SK-N-SH (cell line): ENCODE measurements at regions of chr7 and their contacts with region 1.

Region 1: DNA sequence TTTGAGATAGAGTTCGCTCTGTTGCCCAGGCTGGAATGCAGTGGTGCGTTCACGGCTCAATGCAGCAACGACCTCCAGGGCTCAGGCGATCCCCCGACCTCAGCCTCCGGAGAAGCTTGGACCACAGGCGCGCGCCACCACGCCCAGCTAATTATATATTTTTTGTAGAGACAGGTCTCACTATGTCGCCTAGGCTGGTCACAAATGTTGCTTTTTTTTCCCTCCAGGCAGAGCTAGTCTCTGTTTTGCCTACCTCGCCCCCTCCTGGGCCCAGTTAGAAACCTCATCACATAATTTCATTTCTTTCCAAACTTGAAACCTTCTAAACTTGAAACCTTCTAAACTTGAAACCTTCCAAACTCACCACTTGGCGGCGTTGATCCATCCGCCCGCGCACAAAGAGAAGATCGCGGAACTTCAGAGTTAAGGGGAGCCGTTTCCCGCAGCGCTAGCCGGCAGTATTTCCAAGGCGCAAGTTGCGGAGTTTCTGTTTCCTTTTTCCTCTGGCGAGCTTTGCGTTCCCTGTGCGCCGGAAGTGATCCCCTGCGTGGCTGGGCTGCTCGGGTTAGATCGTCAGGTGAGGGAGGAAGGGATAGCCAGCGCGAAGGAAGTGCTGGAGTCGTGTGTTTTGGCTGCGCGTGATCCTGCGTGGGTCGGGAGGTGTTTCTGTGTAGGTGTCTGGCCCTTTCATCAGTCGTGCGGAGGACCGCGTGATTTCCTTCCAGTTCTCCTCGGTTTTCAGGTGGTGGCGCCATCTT is at the start of gene SSBP1:
- DNase-seq: peak; percentile 88
- H3K4me3 ChIP-seq: peak within 1 kb of the TSS; percentile 94 to 95
- H3K27ac ChIP-seq: peak within 1 kb of the TSS; percentile 69 to 93
- H3K4me1 ChIP-seq: peaks cover 6 to 26% of the 10 kb centered on the region in 2 experiments; a peak in 2 of 4 replicates
- H3K27me3 ChIP-seq: no peaks in the 10 kb centered on the region
- CTCF ChIP-seq: peak; percentile 99
- EP300 ChIP-seq: peak in 1 of 2 experiments; percentile 59; a peak in 2 of 4 replicates
- RAD21 ChIP-seq: peak; percentile 61
- polyA plus RNA-seq, gene SSBP1: 191 and 212 TPM in 2 replicates

Region 2: DNA sequence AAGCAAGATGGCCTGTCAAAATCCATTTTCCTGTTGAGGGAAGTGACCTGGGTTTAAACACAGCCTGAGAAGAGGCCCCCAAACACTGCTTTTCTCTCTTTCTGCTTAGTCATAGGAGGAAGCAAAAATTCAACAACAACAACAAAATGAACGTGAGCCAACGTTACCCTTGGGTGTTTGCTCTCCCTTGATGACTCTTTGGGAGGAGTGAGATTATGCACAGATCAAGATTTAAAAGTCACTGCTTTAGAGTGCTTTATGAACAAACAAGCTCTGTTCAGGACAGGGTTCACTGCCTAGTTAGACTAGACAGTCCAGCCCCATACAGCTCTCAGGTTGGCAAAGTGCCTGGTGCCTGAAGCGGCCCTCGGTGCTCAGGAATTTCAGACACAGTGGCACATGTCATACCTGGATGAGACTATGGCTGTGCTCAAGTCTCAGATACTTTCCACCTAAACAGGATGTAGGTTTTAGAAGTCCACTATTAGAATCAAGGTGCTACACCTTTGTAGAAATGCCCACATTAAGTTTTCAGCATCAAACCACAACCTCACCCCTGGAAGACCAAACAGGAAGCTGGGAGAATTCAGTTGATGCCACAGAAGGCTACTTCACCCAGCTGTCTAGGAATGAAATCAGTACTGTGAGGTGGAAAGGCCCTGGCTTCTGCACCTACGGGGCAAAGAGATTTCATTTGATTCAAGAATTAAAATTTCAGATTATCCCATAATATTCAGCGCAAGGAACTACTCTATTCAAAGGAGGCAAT is 74.7 kb before region 1 on chr7:
- CTCF ChIA-PET with region 1: interaction called, 17 read pairs
- POLR2A ChIA-PET with region 1: interaction called, 4 read pairs
- DNase-seq: no peak
- H3K4me3 ChIP-seq: no peak overlapping the region
- H3K27ac ChIP-seq: peak overlapping the region in 1 of 2 experiments; percentile 18; a peak in 1 of 4 replicates
- H3K4me1 ChIP-seq: no peaks in the 10 kb centered on the region
- H3K27me3 ChIP-seq: no peaks in the 10 kb centered on the region
- CTCF ChIP-seq: no peak
- EP300 ChIP-seq: no peak
- RAD21 ChIP-seq: no peak

Region 3: DNA sequence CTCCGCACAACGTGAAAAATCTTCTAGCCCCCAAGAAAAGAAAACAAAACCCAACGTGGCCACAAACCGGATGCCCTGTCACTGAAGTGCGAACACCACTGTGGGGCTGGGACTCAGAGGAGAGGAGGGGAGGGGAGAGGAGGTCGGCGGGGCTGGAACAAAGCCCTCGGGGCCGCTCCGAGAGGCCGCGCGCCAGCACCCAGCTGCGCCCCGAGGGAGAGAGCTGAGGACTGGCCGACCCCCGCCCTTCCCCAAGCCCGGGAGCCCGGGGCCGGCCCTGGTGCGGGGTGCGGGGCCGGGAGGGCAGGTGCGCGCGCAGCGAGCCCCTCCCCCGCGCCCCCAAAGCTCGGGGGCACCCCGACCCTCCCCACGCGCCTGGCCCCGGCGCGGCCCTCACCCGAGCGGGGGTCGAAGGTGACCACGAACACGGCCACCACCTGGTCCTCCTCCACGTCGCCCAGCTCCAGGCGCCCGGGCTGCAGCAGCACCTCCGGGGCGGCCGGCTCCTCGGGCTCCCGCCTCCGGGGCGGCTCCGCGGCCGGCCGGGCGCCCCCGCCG is 36.4 kb before region 1 on chr7:
- CTCF ChIA-PET with region 1: interaction called, 23 read pairs
- POLR2A ChIA-PET with region 1: interaction called, 4 read pairs
- DNase-seq: peak; percentile 89
- H3K4me3 ChIP-seq: peak overlapping the region; percentile 77 to 81
- H3K27ac ChIP-seq: peak overlapping the region; percentile 38 to 45; a peak in 2 of 4 replicates
- H3K4me1 ChIP-seq: peaks cover 14 to 17% of the 10 kb centered on the region in 2 experiments; a peak in 3 of 4 replicates
- H3K27me3 ChIP-seq: no peaks in the 10 kb centered on the region
- CTCF ChIP-seq: no peak
- EP300 ChIP-seq: no peak
- RAD21 ChIP-seq: no peak

Region 4: DNA sequence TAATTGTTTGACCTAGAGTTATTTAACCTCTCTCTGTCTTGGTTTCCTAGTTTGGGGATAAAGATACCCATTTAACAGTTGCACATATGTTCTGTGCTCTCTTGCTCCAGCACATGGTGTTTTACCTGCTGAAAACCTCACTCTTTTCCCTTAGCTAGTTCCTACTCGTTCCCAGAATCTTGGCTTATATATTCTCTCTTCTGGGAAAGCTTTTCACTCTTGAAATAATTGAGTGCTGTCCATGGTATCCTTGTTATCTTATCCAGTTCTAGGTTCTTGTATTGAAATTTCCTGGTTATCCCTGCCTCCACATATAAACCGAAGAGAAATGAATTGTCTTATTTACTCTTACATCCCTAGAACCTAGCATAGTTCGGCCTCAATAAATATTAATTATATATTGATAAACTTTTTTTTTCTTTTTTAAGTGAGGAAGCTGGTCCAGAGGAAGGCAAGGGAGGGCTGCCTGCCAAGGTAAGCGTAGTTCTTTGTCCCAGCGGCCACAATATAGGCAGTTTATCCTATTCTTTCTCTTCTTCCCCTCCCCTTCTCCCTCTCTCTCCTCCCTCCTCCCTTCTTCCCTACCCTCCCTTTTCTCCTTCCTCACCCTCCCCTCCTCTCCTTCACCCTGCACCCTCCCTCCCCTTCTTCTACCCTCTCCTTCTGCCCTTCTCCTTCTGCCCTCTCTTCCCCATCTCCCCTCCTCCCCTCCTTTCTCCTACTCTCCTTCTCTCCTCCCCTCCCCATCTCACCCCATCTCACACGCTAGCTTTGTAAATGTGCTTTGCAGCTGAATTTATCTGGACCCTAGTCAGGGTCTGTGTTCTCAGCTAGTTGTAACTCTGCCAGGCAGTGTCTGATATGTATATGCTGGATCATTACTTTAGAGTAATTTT is 22.0 kb before region 1 on chr7:
- CTCF ChIA-PET with region 1: interaction called, 44 read pairs
- POLR2A ChIA-PET with region 1: interaction called, 3 read pairs
- DNase-seq: no peak
- H3K4me3 ChIP-seq: no peak overlapping the region
- H3K27ac ChIP-seq: no peak overlapping the region
- H3K4me1 ChIP-seq: no peaks in the 10 kb centered on the region
- H3K27me3 ChIP-seq: no peaks in the 10 kb centered on the region
- CTCF ChIP-seq: no peak
- EP300 ChIP-seq: no peak
- RAD21 ChIP-seq: no peak

Region 5: DNA sequence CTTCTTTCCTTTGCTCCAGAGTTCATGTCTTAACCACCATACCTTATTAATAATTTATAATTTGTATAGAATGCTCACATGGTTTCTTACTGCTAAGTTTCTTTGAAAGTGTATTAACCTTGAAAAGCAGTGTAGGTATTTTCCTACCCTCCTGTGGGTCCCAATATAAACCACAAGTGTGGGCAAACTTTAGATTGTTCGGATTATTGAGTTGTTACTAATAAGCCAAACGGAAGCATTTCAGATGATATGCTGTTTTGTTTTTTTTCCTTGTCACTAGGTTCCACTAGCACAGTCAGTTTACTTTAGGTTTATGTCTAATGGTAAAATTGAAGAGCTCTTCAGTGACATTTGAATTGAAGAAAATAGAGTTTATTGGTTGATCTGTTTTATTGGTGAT is 10.4 kb after region 1 on chr7:
- CTCF ChIA-PET with region 1: interaction called, 17 read pairs
- POLR2A ChIA-PET with region 1: no interaction called
- DNase-seq: no peak
- H3K4me3 ChIP-seq: no peak overlapping the region
- H3K27ac ChIP-seq: no peak overlapping the region
- H3K4me1 ChIP-seq: no peaks in the 10 kb centered on the region
- H3K27me3 ChIP-seq: no peaks in the 10 kb centered on the region
- CTCF ChIP-seq: no peak
- EP300 ChIP-seq: no peak
- RAD21 ChIP-seq: no peak

Region 6: DNA sequence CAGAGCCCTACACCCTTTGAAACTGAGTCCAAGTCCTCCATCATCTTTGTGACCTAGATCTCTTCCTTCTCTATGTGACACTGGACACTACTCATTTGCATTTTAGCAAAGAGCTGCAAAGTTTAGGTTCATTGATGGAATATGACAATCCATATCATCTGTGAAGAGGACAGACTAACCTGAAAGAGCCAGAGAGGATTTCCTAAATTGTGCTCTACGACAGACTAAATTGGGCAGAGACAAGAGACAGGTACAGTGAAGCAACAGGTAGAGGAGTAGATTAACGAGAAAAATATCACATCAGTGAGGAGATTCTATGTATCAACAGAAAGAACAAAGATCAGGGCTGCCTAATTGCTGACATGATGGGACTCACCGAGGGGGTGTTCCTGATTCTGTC is 25.8 kb after region 1 on chr7 and contains the start of gene TAS2R3:
- CTCF ChIA-PET with region 1: interaction called, 35 read pairs
- POLR2A ChIA-PET with region 1: interaction called, 3 read pairs
- DNase-seq: no peak
- H3K4me3 ChIP-seq: no peak within 1 kb of the TSS
- H3K27ac ChIP-seq: no peak within 1 kb of the TSS
- H3K4me1 ChIP-seq: no peaks in the 10 kb centered on the region
- H3K27me3 ChIP-seq: no peaks in the 10 kb centered on the region
- CTCF ChIP-seq: no peak
- EP300 ChIP-seq: no peak
- RAD21 ChIP-seq: no peak
- polyA plus RNA-seq, gene TAS2R3: not detected in 2 replicates